Breast epithelium (tissue), 4 donors: ENCODE measurements at regions of chr1 and their contacts with region 1.

Region 1: DNA sequence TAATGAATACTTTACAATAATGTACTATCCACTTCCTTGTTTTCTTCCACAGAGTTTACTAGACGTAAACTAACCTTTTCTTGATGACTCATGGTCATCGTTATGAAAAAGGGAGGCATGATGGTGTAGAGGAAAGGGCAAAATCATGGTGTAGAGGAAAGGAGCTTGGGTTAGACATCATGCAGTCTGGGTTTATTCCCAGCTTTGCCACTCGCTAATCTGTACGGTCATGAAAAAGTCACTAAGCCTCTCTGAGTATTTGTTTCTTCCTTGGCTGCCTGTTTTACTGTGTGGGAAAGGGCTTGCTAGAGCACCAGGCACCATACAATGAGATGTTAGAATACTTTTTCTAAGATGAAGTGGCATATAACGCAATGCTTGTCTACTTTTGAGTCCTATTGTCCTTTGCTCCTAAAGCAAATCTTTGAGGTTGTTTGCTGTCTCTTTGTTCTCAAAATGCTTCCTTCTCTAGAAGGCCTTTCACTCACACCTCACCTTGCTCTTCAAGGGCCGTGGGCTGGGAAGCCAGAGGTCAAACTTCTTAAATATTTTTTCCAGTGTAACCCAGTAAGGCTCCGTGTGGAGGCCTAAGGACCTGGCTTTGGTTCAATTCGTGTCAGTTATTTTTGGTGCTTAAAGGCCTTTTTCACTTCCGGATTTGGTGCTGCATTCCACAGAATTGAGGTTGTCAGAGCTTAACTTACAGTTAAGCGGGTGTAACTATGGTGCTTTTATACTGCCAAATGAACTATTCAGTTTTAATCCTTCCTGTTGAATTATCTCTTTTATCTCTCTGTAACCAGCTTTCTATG is 9.9 kb upstream of the ETV3 start:
- DNase-seq: no peak
- H3K4me3 ChIP-seq: no peak overlapping the region
- H3K27ac ChIP-seq: peak overlapping the region in 1 of 2 donors; percentile 46
- H3K4me1 ChIP-seq: no peaks in the 10 kb centered on the region
- H3K27me3 ChIP-seq: no peaks in the 10 kb centered on the region
- CTCF ChIP-seq: no peak
- POLR2A ChIP-seq: no peak

Region 2: DNA sequence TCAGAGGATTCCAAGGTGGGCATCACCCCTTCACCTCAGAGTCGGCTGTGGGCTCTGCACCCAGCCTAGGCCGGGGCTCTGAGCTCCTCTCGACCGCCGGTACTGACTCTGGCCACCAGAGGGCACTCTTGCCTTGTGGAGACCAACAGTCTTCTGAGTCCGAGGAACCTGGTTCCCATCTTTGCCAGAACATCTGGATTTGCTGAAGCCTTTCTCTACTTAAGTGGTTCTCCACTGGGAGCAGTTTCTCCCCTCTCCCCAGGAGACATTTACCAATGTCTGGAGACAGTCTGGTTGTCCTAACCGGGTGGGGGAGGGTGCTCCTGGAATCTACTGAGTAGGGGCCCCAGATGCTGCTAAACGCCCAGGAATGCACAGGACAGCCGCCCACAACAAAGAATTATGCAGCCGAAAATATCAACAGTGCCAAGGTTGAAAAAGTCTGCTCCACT is 57.9 kb before region 1 on chr1:
- intact Hi-C with region 1: loop called (anchors 5 kb)
- DNase-seq: peak; percentile 80 to 87
- H3K4me3 ChIP-seq: no peak overlapping the region
- H3K27ac ChIP-seq: peak overlapping the region; percentile 48 to 74
- H3K4me1 ChIP-seq: peaks cover 0 to 14% of the 10 kb centered on the region in 2 donors
- H3K27me3 ChIP-seq: no peaks in the 10 kb centered on the region
- CTCF ChIP-seq: peak; percentile 91 to 95 (median 93)
- POLR2A ChIP-seq: no peak